WTC11 (cell line): ENCODE measurements at regions of chr10 and their contacts with region 1.

Region 1: DNA sequence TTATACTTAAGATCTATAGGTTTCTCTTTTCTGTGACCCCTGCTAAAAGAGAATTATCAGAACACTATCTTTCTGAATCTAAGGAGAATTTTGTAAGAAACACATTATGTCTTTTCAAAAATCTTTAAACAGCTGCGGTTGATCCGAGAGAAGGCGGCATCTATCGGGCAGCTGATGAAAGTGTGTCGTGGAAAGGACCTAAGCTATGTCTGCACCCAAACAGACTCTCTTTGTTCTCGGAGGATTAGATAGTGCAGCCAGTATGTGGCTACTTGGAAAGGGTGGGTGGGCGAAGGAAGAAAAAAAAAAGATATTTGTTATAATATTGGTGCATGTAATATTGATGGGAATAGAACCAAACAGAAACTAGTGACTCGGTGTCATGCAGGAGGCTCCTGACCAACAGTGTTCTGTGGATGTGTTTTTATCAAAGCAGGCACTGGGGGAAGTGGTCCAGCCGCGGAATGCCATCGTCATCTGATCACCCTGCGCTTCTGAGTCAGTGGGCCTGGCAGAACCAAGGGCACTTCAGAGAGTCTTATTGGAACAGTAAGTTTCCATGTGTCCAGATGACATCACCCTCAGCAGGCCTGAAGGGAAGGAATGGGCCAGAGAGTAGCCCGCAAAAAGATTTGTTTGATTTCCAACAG is 509.7 kb upstream of the AKR1E2 start:
- DNase-seq: no peak
- ATAC-seq: no peak
- H3K4me3 Mint-ChIP-seq: no peak overlapping the region
- H3K27ac Mint-ChIP-seq: no peak overlapping the region
- H3K4me1 Mint-ChIP-seq: no peaks in the 10 kb centered on the region
- H3K27me3 Mint-ChIP-seq: peaks cover 3% of the 10 kb centered on the region; the same call in 1 of the 2 replicates
- CTCF ChIP-seq: no peak

Region 2: GRCh38 chr10:3811291-3811870 is 504.9 kb before region 1 on chr10:
- CTCF ChIA-PET with region 1: no interaction called
- POLR2A ChIA-PET with region 1: interaction called, 10 read pairs
- DNase-seq: no peak
- ATAC-seq: no peak
- H3K4me3 Mint-ChIP-seq: no peak overlapping the region
- H3K27ac Mint-ChIP-seq: no peak overlapping the region
- H3K4me1 Mint-ChIP-seq: peaks cover 14% of the 10 kb centered on the region
- H3K27me3 Mint-ChIP-seq: no peaks in the 10 kb centered on the region
- CTCF ChIP-seq: no peak